GM13976 (cell line): ENCODE measurements at regions of chr1 and their contacts with region 1.

Region 1: DNA sequence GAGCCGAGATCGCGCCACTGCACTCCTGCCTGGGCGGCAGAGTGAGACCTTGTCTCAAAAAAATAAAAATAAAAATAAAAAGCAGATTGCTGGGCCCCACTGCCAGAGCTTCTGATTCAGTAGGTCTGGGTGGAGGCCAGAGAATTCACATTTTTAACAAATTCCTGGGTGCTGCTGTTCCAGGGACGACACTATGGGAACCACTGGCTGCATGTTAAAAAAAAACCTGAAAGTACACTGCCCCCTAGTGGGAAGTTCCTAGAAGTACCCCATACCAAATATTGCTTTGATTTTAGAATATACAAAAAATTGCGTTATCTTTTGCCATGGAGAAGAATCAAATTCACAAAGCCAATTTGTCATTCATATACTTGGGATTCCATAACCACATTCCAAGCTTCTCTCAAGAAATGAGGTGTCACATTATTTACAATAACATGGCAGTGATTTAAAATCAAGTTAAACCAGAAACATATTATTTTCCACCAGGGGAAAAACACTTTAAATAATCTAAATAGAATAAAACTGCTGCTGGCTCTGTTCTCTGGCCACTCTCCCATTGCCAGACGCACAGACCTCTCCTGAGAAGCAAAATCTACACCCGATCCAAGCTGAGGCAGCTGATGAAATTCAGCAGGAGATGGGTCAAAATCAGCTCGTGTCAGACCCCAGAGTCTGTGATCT is 27.4 kb downstream of the SYF2 start:
- DNase-seq: peak; percentile 70
- CTCF ChIP-seq: peak; percentile 51

Region 2: DNA sequence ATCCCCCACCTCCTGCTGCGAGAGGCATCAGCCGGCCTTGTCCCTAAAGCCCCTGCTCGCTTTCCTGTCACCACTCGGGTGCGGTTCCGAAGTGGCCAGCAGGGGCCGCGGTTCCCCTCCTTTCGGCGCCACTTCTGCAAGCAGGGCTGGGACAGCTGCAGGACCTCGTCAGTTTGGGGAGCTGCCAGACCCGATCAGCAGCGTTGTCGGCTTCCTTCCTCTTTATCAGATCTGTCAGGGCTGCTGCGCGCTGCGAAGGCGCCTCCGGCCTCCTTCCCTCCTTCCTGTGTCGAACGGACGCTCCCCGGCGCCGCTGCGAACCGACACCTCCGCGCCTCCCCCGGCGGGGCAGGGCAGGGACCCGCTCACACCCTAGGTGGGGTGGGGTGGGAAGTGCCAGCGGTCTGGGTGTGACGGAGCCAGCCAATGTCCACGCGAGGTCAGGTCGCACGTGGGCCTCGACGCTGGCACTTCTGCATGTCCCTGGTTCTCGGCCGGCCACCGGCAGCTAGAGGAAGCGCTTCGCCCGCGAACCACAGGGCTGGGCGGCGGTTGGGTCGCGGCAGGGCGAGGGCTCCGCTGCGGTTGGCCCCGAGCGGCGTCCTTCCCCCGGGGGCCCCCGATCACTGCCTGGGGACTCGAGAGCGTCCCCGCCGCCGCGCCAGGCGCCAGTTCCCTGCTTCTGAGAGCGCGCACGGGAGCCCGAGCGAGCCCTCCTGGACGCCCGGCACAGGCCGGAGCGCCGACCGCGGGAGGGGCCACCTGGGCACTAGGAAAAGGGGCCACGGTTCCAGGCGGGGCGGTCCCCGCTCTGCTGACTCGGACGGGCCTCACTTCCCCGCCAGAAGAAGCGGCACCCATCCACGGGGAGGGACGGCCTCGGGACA is 356.7 kb before region 1 on chr1:
- in situ Hi-C with region 1: loop called (anchors 10 kb)
- DNase-seq: peak; percentile 91
- CTCF ChIP-seq: peak; percentile 98

Region 3: DNA sequence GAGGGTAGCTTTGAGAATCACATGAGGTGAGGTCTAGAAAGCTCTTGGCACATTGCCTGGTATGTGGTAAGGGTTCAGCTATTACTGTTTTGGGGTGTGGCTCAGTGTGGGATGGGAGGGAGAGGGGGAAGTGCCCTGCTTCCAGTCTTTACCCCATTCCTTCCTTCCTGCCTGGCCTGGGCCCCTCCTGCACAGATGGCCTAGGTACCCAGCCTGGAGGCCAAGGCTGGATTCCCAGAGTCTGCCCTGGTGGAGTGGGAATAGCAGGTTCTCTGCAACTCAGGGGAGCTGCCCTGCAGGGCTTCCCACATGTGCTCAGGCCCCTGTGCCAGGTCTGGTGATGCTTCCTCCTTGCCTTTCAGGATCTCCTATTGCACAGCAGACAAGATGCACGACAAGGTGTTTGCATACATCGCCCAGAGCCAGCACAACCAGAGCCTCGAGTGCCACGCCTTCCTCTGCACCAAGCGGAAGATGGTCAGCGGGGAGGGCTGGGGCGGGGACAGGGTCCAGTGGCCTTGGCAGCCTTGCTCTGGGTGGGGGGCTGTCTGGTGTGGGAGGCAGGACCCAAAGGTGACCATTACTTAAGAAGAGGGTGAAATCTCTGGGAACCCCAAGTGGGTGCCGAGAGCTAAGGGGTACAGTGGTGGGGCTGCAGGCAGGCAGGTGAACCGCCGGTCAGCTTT is 352.0 kb after region 1 on chr1:
- in situ Hi-C with region 1: no loop called
- DNase-seq: no peak
- CTCF ChIP-seq: no peak